ENCODE measurements at regions of chr11 and their contacts with region 1.

Region 1: DNA sequence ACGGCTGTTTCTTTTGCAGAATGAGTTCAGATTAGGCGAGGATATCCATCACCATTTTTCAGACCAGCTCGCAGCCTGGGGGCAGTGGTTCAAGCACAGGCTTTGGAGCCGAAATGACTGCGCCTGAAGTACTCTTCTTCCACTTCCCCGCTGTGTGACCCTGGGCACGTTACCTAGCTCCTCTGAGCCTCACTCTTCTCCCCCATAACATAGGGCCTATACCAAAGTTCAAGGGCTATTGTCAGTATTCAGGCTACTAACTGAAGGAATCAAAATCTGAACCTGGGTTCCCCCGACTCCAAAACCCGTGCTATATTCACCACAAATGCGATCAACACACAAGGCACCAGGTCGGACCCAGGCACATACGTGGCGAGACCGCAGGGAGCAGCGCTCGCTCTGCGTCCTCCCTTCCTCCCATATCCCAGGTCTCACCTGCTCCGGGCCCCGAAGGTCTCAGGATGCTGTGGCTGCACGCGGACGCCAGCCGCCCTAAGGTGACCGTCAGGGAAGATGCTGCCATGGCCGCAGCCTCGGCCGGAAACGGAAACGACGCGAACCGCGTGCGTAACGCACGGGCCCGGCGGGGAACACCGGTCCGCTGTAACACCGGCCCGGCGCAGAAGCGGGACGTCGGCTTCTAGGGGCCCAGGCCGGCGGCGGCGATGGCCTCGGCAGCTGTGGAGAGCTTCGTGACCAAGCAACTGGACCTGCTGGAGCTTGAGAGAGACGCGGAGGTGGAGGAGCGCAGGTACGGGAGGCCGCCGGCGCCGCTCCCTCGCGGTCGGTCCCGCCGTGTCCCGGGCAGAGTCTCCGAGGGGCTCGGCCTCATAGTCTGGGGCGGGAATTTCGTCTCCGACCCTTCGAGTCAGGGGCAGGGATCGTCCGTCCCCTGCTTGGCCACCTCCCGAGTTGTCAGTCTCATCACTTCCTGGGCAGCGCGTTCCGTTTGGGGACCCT is at the starts of genes IGHMBP2 and MRPL21:
- DNase-seq: peak; percentile 87 to 92
- ATAC-seq: peak; percentile 96 to 99 (median 98)
- H3K4me3 ChIP-seq: peak within 1 kb of the TSS; percentile 100
- H3K27ac ChIP-seq: peak within 1 kb of the TSS; percentile 87
- H3K4me1 ChIP-seq: peaks cover 29% of the 10 kb centered on the region
- H3K27me3 ChIP-seq: no peaks in the 10 kb centered on the region
- CTCF ChIP-seq: no peak
- total RNA-seq, gene IGHMBP2: 12.1 to 18.4 (median 13.0) TPM
- total RNA-seq, gene MRPL21: 59.2 to 104 (median 70.8) TPM

Region 2: GRCh38 chr11:69048718-69049489 is 145.3 kb after region 1 on chr11 and contains the start of gene TPCN2:
- intact Hi-C with region 1: loop called in 1 of 2 experiments (anchors 10 kb)
- DNase-seq: peak; percentile 94 to 95
- ATAC-seq: peak; percentile 95 to 98 (median 96)
- H3K4me3 ChIP-seq: peak within 1 kb of the TSS; percentile 81
- H3K27ac ChIP-seq: peak within 1 kb of the TSS; percentile 77
- H3K4me1 ChIP-seq: peaks cover 26% of the 10 kb centered on the region
- H3K27me3 ChIP-seq: no peaks in the 10 kb centered on the region
- CTCF ChIP-seq: no peak
- total RNA-seq, gene TPCN2: 3.5 to 6.0 (median 3.9) TPM

Region 3: GRCh38 chr11:69088676-69089146 is 185.1 kb after region 1 on chr11:
- intact Hi-C with region 1: loop called in 1 of 2 experiments (anchors 5 kb)
- DNase-seq: peak; percentile 63 to 72
- ATAC-seq: peak; percentile 64 to 80 (median 71)
- H3K4me3 ChIP-seq: no peak overlapping the region
- H3K27ac ChIP-seq: no peak overlapping the region
- H3K4me1 ChIP-seq: peaks cover 6% of the 10 kb centered on the region
- H3K27me3 ChIP-seq: no peaks in the 10 kb centered on the region
- CTCF ChIP-seq: peak; percentile 61

Measured in psoas muscle (tissue), 8 donors.